Breast epithelium (tissue), 4 donors: ENCODE measurements at regions of chr4 and their contacts with region 1.

Region 1: DNA sequence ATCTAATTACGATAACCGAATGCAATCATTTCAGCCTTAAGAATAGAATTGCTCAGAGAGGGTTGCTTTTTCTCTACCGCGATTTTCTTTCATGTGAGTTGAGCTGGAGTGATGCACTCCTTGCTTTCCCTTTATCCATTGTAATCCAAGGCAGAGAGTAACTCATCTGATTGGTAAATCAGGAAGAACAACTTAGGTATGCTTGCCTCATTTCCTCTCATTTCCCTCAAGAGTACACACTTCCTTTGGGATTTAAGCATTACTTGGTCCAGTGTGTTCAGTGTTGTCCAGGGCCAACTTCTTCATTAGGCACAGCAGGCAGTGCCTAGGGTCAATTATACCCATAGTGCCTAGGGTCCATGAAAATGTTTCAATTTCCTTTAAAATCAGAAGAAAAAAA is 15.7 kb upstream of the N4BP2 start:
- DNase-seq: no peak
- H3K4me3 ChIP-seq: no peak overlapping the region
- H3K27ac ChIP-seq: no peak overlapping the region
- H3K4me1 ChIP-seq: no peaks in the 10 kb centered on the region
- H3K27me3 ChIP-seq: no peaks in the 10 kb centered on the region
- CTCF ChIP-seq: no peak
- POLR2A ChIP-seq: no peak

Region 2: DNA sequence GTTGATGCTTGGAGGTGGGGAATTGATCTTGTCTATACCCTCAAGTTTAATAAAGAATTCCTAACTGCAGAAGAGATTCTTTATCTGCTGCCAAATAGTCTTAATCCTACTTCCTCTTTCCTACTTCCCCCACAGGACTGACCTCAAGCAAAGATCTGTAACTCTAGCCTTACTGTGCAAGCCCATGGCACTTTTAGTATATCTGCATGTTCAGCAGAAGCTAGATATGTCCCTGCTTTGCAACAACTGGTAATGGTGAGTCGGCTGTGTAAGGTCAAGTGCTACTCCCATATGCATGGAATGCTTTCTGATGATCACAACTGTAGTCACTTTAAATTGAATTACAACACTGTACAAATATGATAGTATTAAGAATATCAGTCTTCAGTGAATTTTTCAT is 36.9 kb before region 1 on chr4:
- intact Hi-C with region 1: loop called (anchors 5 kb)
- DNase-seq: no peak
- H3K4me3 ChIP-seq: no peak overlapping the region
- H3K27ac ChIP-seq: no peak overlapping the region
- H3K4me1 ChIP-seq: no peaks in the 10 kb centered on the region
- H3K27me3 ChIP-seq: no peaks in the 10 kb centered on the region
- CTCF ChIP-seq: no peak
- POLR2A ChIP-seq: no peak